Heart right ventricle (tissue), 16 donors: ENCODE measurements at regions of chr1 and their contacts with region 1.

Region 1: DNA sequence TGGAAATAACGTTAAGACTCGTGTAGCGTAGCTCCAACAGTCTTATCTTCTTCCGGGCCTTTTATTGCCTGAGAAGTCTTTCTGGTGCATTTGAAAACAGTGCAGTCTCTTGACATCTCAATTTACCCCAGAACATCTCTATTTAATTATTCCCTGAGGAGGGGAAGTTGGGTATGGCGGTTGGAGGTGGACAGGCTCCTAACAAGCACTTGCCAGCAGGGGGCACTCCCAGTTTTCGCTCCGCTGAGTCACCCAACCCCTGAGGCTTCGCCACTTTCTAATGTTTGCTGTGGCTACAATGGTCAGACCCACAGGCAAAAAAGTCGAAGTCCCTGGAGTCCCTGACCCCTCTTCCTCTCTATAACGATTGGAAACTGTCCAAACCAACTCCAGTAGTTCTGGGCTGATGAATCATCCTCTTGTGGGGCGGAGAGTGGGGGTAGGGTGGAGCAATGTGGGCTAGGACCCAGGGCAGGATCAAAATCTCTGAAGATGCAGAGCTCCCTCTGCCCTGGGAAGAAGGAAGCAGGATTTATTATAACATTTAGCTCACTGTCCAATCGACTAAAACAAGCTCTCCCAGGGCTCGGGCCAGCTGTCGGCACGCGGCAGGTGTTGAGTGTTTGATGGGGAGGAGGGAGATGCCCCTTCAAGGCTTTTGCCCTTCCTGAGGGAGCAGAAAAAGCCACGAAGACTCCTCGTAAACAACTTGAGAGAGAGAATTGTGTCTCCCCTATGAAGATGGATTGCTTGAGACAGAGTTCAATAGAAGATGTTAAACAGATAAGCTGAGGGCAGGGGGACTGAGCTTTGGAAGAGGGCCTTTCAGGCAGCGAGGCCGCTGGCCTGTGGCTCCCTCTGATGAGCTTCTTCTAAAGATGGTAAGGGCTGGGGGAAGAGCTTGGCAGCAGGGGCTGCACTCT is 85.7 kb downstream of the BRINP2 start:
- DNase-seq: peak; percentile 64 to 70
- ATAC-seq: peak; percentile 73 to 92 (median 88)
- H3K4me3 ChIP-seq: no peak overlapping the region
- H3K27ac ChIP-seq: no peak overlapping the region
- H3K4me1 ChIP-seq: peaks cover 0 to 12% (median 7%) of the 10 kb centered on the region in 9 donors
- H3K27me3 ChIP-seq: peaks cover 0 to 12% (median 4%) of the 10 kb centered on the region in 7 donors
- CTCF ChIP-seq: peak; percentile 35 to 75 (median 66)

Region 2: DNA sequence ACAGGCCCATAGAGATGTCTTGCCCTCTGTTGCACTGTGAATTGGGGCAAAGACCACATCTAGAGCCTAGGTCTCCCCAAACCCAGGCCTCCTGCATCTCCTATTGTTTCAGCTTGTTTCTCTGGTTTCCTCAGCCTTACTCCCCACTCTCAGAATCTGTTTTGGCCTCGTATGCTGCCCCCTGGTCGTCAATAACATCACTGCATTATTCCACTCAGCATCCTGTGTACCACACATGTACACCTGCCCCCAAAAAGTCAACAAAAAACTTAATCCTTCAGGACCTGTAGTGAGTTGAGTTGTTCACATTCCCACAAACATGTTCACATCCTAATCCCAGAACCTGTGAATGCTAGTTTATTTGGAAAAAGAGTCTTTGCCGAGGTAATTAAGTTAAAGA is 99.2 kb after region 1 on chr1:
- intact Hi-C with region 1: loop called in 8 of 10 experiments (anchors 2 to 10 kb)
- DNase-seq: no peak
- ATAC-seq: peak in 1 of 8 donors; percentile 41
- H3K4me3 ChIP-seq: no peak overlapping the region
- H3K27ac ChIP-seq: no peak overlapping the region
- H3K4me1 ChIP-seq: no peaks in the 10 kb centered on the region
- H3K27me3 ChIP-seq: peaks cover 0 to 49% (median 17%) of the 10 kb centered on the region in 7 donors
- CTCF ChIP-seq: peak in 7 of 9 donors; percentile 30 to 51 (median 39)

Region 3: GRCh38 chr1:177780096-177780700 is 523.8 kb after region 1 on chr1:
- intact Hi-C with region 1: loop called in 7 of 10 experiments (anchors 1 to 10 kb)
- DNase-seq: no peak
- ATAC-seq: peak in 5 of 8 donors; percentile 44 to 67 (median 65)
- H3K4me3 ChIP-seq: no peak overlapping the region
- H3K27ac ChIP-seq: no peak overlapping the region
- H3K4me1 ChIP-seq: no peaks in the 10 kb centered on the region
- H3K27me3 ChIP-seq: peaks cover 0 to 52% (median 15%) of the 10 kb centered on the region in 7 donors
- CTCF ChIP-seq: peak in 8 of 9 donors; percentile 39 to 64 (median 49)

Region 4: DNA sequence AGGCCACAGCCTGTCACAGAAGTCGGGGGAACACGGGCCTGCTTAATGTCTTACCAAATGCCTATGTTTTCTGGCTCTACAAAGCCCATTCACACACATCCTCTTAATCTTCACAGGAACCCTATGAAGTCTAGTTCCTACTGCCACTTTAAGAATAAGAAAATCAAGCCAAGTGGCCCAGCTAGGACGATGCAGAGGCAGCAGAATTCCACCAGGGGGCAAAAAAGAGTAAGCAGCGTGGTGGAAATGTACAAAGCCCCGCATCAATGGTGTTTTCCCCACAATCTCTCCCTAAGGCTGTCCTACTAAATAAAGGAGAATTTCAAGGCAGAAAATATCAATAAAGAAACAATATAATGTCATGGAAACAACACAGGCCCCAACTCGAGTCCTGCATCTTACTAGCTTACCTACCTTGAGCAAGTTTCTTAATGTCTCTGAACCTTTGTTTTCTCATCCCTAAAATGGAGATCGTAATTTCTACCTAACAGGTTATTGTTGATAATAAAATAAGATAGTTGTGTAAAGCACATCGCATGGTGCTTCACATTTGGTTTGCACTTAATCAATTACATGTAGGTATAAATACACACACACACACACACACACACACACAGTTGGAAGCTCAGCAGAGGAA is 692.0 kb after region 1 on chr1:
- intact Hi-C with region 1: loop called in 5 of 10 experiments (anchors 5 to 10 kb)
- DNase-seq: peak in 1 of 2 donors; percentile 46
- ATAC-seq: peak in 7 of 8 donors; percentile 45 to 77 (median 56)
- H3K4me3 ChIP-seq: no peak overlapping the region
- H3K27ac ChIP-seq: no peak overlapping the region
- H3K4me1 ChIP-seq: peaks cover 0 to 10% (median 0%) of the 10 kb centered on the region in 9 donors
- H3K27me3 ChIP-seq: no peaks in the 10 kb centered on the region
- CTCF ChIP-seq: peak; percentile 77 to 91 (median 89)